Activated CD8-positive, alpha-beta memory T cell treated with anti-CD3 and anti-CD28 coated beads, Interleukin-2, amount 10 ng/mL, durations not matched to agents 7 days and 5 days (primary cell): ENCODE measurements at regions of chr10 and their contacts with region 1.

Region 1: GRCh38 chr10:91908337-91909116 is 759 bp downstream of the FGFBP3 start:
- DNase-seq: peak; percentile 84
- ATAC-seq: peak; percentile 89
- H3K4me3 Mint-ChIP-seq: peak overlapping the region; percentile 84
- H3K27ac Mint-ChIP-seq: peak overlapping the region; percentile 81
- H3K4me1 Mint-ChIP-seq: peaks cover 30% of the 10 kb centered on the region
- H3K27me3 Mint-ChIP-seq: peaks cover 10% of the 10 kb centered on the region

Region 2: GRCh38 chr10:91758303-91759146 is 150.0 kb before region 1 on chr10:
- CTCF ChIA-PET with region 1: interaction called, 34 read pairs
- DNase-seq: no peak
- ATAC-seq: peak; percentile 49
- H3K4me3 Mint-ChIP-seq: no peak overlapping the region
- H3K27ac Mint-ChIP-seq: no peak overlapping the region
- H3K4me1 Mint-ChIP-seq: peaks cover 2% of the 10 kb centered on the region
- H3K27me3 Mint-ChIP-seq: peaks cover 56% of the 10 kb centered on the region

Region 3: GRCh38 chr10:91875779-91876178 is 32.7 kb before region 1 on chr10:
- CTCF ChIA-PET with region 1: no interaction called
- DNase-seq: no peak
- ATAC-seq: no peak
- H3K4me3 Mint-ChIP-seq: no peak overlapping the region
- H3K27ac Mint-ChIP-seq: no peak overlapping the region
- H3K4me1 Mint-ChIP-seq: no peaks in the 10 kb centered on the region
- H3K27me3 Mint-ChIP-seq: peaks cover 5% of the 10 kb centered on the region

Region 4: GRCh38 chr10:91923371-91924211 is 15.1 kb after region 1 on chr10 and contains the start of gene BTAF1:
- CTCF ChIA-PET with region 1: interaction called, 15 read pairs
- DNase-seq: peak; percentile 95
- ATAC-seq: peak; percentile 97
- H3K4me3 Mint-ChIP-seq: peak within 1 kb of the TSS; percentile 97
- H3K27ac Mint-ChIP-seq: peak within 1 kb of the TSS; percentile 97
- H3K4me1 Mint-ChIP-seq: peaks cover 48% of the 10 kb centered on the region
- H3K27me3 Mint-ChIP-seq: no peaks in the 10 kb centered on the region
- total RNA-seq, gene BTAF1: 43.4 to 61.6 TPM

Region 5: DNA sequence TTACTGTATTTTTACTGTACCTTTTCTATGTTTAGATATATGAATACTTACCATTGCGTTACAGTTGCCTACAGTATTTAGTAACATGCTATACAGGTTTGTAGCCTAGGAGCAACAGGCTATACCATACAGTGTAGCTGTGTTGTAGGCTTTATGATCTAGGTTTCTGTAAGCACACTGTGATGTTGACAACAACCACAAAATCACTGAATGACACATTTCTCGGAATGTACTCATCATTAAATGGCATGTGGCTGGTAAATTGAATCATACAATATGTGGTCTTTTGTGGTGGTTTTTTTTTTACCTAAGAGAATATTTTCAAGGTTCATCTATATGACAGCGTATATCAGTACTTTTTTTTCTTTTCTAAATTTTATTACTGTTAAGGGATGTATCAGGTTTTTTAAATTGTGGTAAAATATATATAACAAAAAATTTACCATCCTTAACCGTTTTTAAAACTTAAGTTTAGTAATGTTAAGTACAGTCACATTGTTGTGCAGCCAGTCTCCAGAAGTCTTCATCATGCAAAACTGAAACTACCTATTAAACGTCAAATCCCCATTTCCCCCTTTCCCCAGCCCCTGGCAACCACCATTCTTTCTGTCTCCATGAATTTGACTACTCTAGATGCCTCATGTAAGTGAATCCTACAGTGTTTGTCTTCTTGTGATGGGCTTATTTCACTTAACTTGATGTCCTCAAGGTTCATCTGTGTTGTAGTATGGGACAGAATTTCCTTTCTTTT is 36.5 kb after region 1 on chr10:
- CTCF ChIA-PET with region 1: no interaction called
- DNase-seq: peak; percentile 51
- ATAC-seq: peak; percentile 95
- H3K4me3 Mint-ChIP-seq: peak overlapping the region; percentile 65
- H3K27ac Mint-ChIP-seq: peak overlapping the region; percentile 90
- H3K4me1 Mint-ChIP-seq: peaks cover 32% of the 10 kb centered on the region
- H3K27me3 Mint-ChIP-seq: no peaks in the 10 kb centered on the region